Heart left ventricle (tissue), 16 donors: ENCODE measurements at regions of chr12 and their contacts with region 1.

Region 1: GRCh38 chr12:68530965-68531364 is 79.7 kb upstream of the RAP1B start:
- DNase-seq: peak in 3 of 5 donors; percentile 25 to 37 (median 31)
- ATAC-seq: peak in 3 of 4 donors; percentile 55 to 61 (median 59)
- H3K4me3 ChIP-seq: no peak overlapping the region
- H3K27ac ChIP-seq: peak overlapping the region in 6 of 12 donors; percentile 28 to 52 (median 40)
- H3K4me1 ChIP-seq: peaks cover 0 to 26% (median 0%) of the 10 kb centered on the region in 12 donors
- H3K27me3 ChIP-seq: no peaks in the 10 kb centered on the region
- CTCF ChIP-seq: no peak
- POLR2A ChIP-seq: no peak

Region 2: DNA sequence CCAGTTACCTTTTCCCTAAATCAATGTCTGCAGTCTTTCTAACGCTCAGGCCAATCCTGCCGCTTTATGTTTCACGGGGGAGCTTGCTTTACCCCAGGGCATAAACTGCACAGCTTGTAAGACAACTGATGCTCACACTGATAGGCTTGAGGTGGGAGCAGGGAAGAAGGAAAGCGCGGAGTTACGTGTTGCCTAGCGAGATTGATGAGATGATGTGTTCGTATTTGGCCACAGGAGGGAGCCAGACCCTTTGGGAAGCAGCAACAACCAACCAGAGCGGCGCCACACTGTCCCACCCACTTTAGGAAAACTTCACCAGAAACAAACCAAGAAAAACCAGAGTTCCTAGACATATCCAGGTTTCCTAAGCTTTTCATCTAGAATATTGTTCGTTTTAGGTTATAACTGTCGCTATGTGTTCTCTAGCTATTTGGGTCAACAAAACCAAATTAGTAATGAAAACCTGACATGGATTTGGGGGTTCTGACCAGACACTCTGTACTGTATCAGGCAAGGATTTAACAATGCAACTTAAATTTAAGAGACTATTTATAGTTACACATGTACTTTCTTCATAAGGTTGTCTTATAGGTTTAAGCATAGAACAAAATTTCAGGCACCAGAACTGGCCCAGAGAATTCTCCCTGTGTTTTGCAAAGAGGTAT is 307.8 kb before region 1 on chr12:
- intact Hi-C with region 1: no loop called
- DNase-seq: peak; percentile 71 to 87 (median 78)
- ATAC-seq: peak; percentile 95 to 99 (median 98)
- H3K4me3 ChIP-seq: peak overlapping the region in 1 of 12 donors; percentile 18
- H3K27ac ChIP-seq: no peak overlapping the region
- H3K4me1 ChIP-seq: peaks cover 0 to 9% (median 0%) of the 10 kb centered on the region in 12 donors
- H3K27me3 ChIP-seq: peaks cover 0 to 10% (median 0%) of the 10 kb centered on the region in 9 donors
- CTCF ChIP-seq: peak; percentile 77 to 93 (median 84)
- POLR2A ChIP-seq: no peak

Region 3: GRCh38 chr12:68406134-68406594 is 124.8 kb before region 1 on chr12:
- intact Hi-C with region 1: loop called in 1 of 10 experiments (anchors 5 kb)
- DNase-seq: peak; percentile 93 to 96 (median 95)
- ATAC-seq: peak; percentile 94 to 99 (median 99)
- H3K4me3 ChIP-seq: peak overlapping the region in 1 of 12 donors; percentile 26
- H3K27ac ChIP-seq: peak overlapping the region; percentile 45 to 87 (median 74)
- H3K4me1 ChIP-seq: peaks cover 5 to 32% (median 24%) of the 10 kb centered on the region in 12 donors
- H3K27me3 ChIP-seq: no peaks in the 10 kb centered on the region
- CTCF ChIP-seq: peak in 10 of 12 donors; percentile 27 to 65 (median 46)
- POLR2A ChIP-seq: peak in 1 of 2 donors; percentile 0